Activated B cell treated with CpG ODN at 0.5 μM for 24 hours (primary cell): ENCODE measurements at regions of chr5 and their contacts with region 1.

Region 1: DNA sequence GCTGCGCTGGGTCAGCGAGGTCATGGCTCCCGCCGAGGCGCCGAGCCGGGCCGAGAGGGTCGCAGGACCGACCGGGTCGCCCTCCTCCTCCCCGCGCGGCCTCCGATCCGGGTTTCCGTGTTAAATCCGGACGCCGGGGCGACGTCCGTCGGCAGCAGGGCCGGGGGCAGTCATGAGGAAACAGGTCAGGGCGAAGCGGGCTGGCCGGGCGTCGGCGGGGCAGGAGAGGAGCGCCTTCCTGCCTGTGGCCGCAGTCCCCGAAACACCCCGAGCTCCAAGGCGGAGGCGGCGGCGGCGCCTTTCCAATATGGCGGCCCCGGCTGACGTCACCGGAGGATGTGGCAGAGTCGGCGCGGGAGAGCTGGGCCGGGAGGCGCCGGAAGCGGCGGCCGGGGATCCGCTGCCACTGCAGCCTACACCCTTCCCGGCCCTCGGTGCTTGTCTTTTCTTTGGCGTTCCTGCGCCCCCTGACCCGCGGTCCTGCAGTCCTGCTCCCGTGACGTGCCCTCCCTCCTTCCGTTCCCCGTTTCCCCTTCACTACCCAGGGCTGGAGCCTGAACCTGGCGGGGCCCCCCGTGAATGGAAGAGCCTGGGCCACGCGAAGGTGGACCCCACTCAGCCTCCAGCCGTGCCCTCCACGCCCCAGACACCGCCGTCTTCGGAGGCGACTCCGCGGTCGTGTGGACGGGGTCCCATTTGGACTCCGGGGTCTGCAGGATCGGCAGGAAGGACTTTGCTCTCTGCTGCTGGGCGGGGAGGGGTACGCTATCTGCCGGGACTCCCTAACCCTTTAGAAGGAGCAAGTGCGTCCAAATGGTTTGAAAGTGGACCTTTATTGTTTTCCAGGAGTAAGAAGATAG is at the start of gene GOLPH3:
- DNase-seq: peak; percentile 86
- ATAC-seq: peak; percentile 89
- H3K4me3 Mint-ChIP-seq: peak within 1 kb of the TSS; percentile 96
- H3K27ac Mint-ChIP-seq: peak within 1 kb of the TSS; percentile 92
- H3K4me1 Mint-ChIP-seq: peaks cover 40% of the 10 kb centered on the region
- H3K27me3 Mint-ChIP-seq: no peaks in the 10 kb centered on the region
- CTCF ChIP-seq: no peak
- total RNA-seq, gene GOLPH3: 55.5 and 60.1 TPM in 2 replicates

Region 2: GRCh38 chr5:31531888-31532710 is 642.1 kb before region 1 on chr5 and contains the starts of genes C5orf22 and DROSHA:
- CTCF ChIA-PET with region 1: no interaction called
- POLR2A ChIA-PET with region 1: interaction called, 4 read pairs
- intact Hi-C with region 1: loop called (anchors 2 kb)
- DNase-seq: peak; percentile 81
- ATAC-seq: peak; percentile 98
- H3K4me3 Mint-ChIP-seq: peak within 1 kb of the TSS; percentile 99
- H3K27ac Mint-ChIP-seq: peak within 1 kb of the TSS; percentile 92
- H3K4me1 Mint-ChIP-seq: peaks cover 43% of the 10 kb centered on the region
- H3K27me3 Mint-ChIP-seq: no peaks in the 10 kb centered on the region
- CTCF ChIP-seq: no peak
- total RNA-seq, gene C5orf22: 27.0 and 27.1 TPM in 2 replicates
- total RNA-seq, gene DROSHA: 53.8 and 59.8 TPM in 2 replicates

Region 3: DNA sequence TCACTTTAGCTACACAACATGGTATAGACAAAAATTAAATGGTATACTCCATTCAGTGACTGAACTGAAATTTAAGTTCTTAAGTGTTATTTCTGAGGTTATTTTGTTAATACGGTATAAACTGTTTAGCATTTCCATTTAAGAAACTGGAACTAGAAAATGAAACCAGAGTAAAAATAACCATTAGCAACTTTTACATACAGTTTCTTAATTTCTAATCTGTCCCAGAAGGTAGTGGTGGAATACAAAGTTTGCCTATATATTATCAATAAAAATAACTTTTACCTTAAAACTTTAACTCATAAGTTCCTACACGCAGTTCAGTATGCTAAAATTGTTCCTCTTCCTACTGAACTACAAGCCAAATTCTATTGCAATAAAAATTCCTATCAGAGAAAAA is 10.5 kb before region 1 on chr5:
- CTCF ChIA-PET with region 1: no interaction called
- POLR2A ChIA-PET with region 1: interaction called, 17 read pairs
- intact Hi-C with region 1: no loop called
- DNase-seq: no peak
- ATAC-seq: no peak
- H3K4me3 Mint-ChIP-seq: peak overlapping the region; percentile 51
- H3K27ac Mint-ChIP-seq: peak overlapping the region; percentile 75
- H3K4me1 Mint-ChIP-seq: peaks cover 50% of the 10 kb centered on the region
- H3K27me3 Mint-ChIP-seq: no peaks in the 10 kb centered on the region
- CTCF ChIP-seq: no peak

Region 4: GRCh38 chr5:32206509-32207354 is 32.5 kb after region 1 on chr5:
- CTCF ChIA-PET with region 1: no interaction called
- POLR2A ChIA-PET with region 1: interaction called, 9 read pairs
- intact Hi-C with region 1: loop called (anchors 1 kb)
- DNase-seq: no peak
- ATAC-seq: no peak
- H3K4me3 Mint-ChIP-seq: peak overlapping the region; percentile 15
- H3K27ac Mint-ChIP-seq: peak overlapping the region; percentile 78
- H3K4me1 Mint-ChIP-seq: peaks cover 22% of the 10 kb centered on the region
- H3K27me3 Mint-ChIP-seq: no peaks in the 10 kb centered on the region
- CTCF ChIP-seq: no peak

Region 5: DNA sequence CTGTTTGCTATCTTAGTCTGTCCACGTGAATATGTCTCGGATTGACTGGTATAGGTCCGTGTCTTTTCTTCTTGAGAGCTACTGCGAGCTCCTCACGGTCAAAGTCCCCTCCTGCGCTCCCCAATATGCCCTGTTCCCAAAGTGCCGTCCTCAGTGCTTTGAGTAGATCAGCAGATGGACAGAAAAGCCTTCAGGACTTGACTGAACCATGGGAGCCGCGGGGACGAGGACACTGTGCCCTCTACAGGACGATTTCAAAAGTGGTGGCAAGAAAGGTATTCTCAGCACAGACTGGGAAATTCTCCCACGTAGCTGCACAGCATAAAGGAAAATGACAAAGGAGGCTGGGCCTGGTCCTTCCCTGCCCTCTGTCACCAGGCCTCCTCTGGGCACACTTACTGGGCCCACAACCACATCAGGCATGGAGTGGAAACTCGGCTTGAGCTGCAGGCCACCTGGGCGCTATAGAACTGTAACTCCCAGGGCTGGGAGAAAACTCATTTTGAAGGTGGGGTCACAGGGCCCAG is 155.1 kb after region 1 on chr5:
- CTCF ChIA-PET with region 1: interaction called, 3 read pairs
- POLR2A ChIA-PET with region 1: no interaction called
- intact Hi-C with region 1: loop called (anchors 1 kb)
- DNase-seq: peak; percentile 21
- ATAC-seq: peak; percentile 87
- H3K4me3 Mint-ChIP-seq: no peak overlapping the region
- H3K27ac Mint-ChIP-seq: no peak overlapping the region
- H3K4me1 Mint-ChIP-seq: peaks cover 2% of the 10 kb centered on the region
- H3K27me3 Mint-ChIP-seq: no peaks in the 10 kb centered on the region
- CTCF ChIP-seq: no peak